Activated B cell treated with CpG ODN at 0.5 μM for 24 hours (primary cell): ENCODE measurements at regions of chr11 and their contacts with region 1.

Region 1: DNA sequence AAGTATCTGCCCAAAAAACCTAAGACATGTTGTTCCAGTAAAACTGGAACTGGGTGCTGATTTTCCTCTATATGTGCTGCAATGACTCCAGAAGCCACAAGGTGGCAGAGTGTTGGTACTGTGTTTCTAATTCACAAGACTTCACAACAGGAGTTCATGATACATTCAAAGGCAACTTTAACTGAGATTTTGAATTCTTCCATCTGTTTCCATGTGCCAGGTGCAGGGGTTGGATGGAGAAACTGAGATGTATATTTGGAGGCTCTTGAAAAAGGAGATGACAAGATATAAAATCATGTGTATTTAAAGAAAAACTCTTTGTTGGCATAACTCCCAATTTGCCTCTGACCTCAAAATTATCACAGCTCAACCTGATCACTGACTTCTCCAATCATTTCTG is 1098.6 kb upstream of the CCDC90B start:
- DNase-seq: no peak
- ATAC-seq: no peak
- H3K4me3 Mint-ChIP-seq: no peak overlapping the region
- H3K27ac Mint-ChIP-seq: no peak overlapping the region
- H3K4me1 Mint-ChIP-seq: no peaks in the 10 kb centered on the region
- H3K27me3 Mint-ChIP-seq: no peaks in the 10 kb centered on the region
- CTCF ChIP-seq: peak; percentile 93

Region 2: GRCh38 chr11:83827940-83828554 is 556.7 kb before region 1 on chr11:
- CTCF ChIA-PET with region 1: no interaction called
- POLR2A ChIA-PET with region 1: no interaction called
- intact Hi-C with region 1: loop called (anchors 5 kb)
- DNase-seq: no peak
- ATAC-seq: peak; percentile 45
- H3K4me3 Mint-ChIP-seq: no peak overlapping the region
- H3K27ac Mint-ChIP-seq: no peak overlapping the region
- H3K4me1 Mint-ChIP-seq: peaks cover 2% of the 10 kb centered on the region
- H3K27me3 Mint-ChIP-seq: peaks cover 5% of the 10 kb centered on the region
- CTCF ChIP-seq: no peak

Region 3: GRCh38 chr11:84524422-84525051 is 139.8 kb after region 1 on chr11:
- CTCF ChIA-PET with region 1: interaction called, 4 read pairs
- POLR2A ChIA-PET with region 1: no interaction called
- intact Hi-C with region 1: loop called (anchors 2 kb)
- DNase-seq: no peak
- ATAC-seq: no peak
- H3K4me3 Mint-ChIP-seq: no peak overlapping the region
- H3K27ac Mint-ChIP-seq: no peak overlapping the region
- H3K4me1 Mint-ChIP-seq: no peaks in the 10 kb centered on the region
- H3K27me3 Mint-ChIP-seq: peaks cover 13% of the 10 kb centered on the region
- CTCF ChIP-seq: no peak

Region 4: DNA sequence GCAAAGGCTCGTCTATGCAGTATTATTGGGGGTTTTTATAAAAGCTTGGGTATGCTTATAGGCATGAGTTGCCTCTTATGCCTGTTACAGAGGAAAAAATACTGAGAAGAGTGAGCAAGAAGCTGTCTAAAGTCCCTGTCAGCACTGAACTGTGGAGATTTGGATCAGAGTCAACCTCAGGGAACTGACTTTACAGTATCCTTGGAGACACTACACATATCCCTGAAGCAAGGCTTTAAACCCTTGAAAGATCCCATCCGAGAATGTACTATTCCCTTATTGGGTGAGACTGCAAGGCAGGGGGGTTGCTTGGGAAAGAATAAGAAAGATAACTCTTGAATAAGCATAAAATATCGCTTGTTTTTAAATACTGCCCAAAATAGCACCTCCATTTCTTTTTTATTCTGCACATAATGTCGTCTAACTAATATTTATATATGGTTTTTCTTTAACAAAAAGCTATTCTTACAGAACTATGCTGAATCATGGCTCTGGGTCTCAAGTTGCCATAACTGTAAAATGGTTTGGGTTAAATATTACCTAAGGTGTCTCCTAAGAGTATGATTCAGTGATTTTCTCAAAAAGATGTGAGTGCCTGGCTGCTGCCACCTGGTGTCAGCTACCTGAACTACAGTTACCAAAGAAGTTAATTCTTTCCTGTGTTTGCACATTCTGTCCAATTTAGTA is 179.6 kb after region 1 on chr11:
- CTCF ChIA-PET with region 1: interaction called, 8 read pairs
- POLR2A ChIA-PET with region 1: no interaction called
- intact Hi-C with region 1: loop called (anchors 1 kb)
- DNase-seq: no peak
- ATAC-seq: peak; percentile 69
- H3K4me3 Mint-ChIP-seq: no peak overlapping the region
- H3K27ac Mint-ChIP-seq: no peak overlapping the region
- H3K4me1 Mint-ChIP-seq: no peaks in the 10 kb centered on the region
- H3K27me3 Mint-ChIP-seq: peaks cover 7% of the 10 kb centered on the region
- CTCF ChIP-seq: no peak